ENCODE measurements at regions of chr10 and their contacts with region 1.

Region 1: DNA sequence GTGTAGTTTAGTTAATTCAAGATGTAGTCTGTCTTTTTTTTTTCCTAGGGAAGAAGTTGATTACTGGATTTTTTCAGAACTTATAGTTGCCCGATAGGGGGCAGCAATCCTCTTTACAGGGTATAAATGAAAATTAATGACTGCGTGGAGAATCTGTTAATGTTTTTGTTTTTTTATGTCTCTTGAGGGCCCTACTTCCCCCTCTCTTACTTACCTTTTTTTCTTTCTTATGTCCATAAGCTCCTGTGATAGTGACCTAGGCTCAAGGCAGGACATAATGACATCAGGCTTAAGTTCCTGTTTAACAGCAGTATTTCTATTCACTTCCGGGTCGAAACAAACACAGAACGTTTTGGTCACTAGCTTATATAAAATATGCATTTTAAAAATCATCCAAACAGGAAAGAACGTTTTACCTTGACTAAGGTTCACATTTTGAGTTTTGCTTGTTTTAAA is 18.8 kb downstream of the CDC123 start:
- DNase-seq: no peak
- ATAC-seq: no peak
- H3K4me3 Mint-ChIP-seq: peak overlapping the region; percentile 14
- H3K27ac Mint-ChIP-seq: peak overlapping the region; percentile 82
- H3K4me1 Mint-ChIP-seq: peaks cover 13% of the 10 kb centered on the region
- H3K27me3 Mint-ChIP-seq: no peaks in the 10 kb centered on the region

Region 2: GRCh38 chr10:12195603-12196506 is 18.9 kb before region 1 on chr10 and contains the starts of genes CDC123 and NUDT5:
- CTCF ChIA-PET with region 1: interaction called, 20 read pairs
- DNase-seq: peak; percentile 93
- ATAC-seq: peak; percentile 94
- H3K4me3 Mint-ChIP-seq: peak within 1 kb of the TSS; percentile 97
- H3K27ac Mint-ChIP-seq: peak within 1 kb of the TSS; percentile 92
- H3K4me1 Mint-ChIP-seq: peaks cover 57% of the 10 kb centered on the region
- H3K27me3 Mint-ChIP-seq: no peaks in the 10 kb centered on the region
- total RNA-seq, gene CDC123: 95.2 to 130 TPM
- total RNA-seq, gene NUDT5: 107 to 125 TPM

Region 3: GRCh38 chr10:12201543-12201942 is 13.2 kb before region 1 on chr10:
- CTCF ChIA-PET with region 1: interaction called, 20 read pairs
- DNase-seq: peak; percentile 56
- ATAC-seq: peak; percentile 70
- H3K4me3 Mint-ChIP-seq: peak overlapping the region; percentile 10
- H3K27ac Mint-ChIP-seq: peak overlapping the region; percentile 77
- H3K4me1 Mint-ChIP-seq: peaks cover 53% of the 10 kb centered on the region
- H3K27me3 Mint-ChIP-seq: no peaks in the 10 kb centered on the region

Region 4: GRCh38 chr10:12225444-12225843 is 10.7 kb after region 1 on chr10:
- CTCF ChIA-PET with region 1: interaction called, 12 read pairs
- DNase-seq: no peak
- ATAC-seq: no peak
- H3K4me3 Mint-ChIP-seq: no peak overlapping the region
- H3K27ac Mint-ChIP-seq: no peak overlapping the region
- H3K4me1 Mint-ChIP-seq: no peaks in the 10 kb centered on the region
- H3K27me3 Mint-ChIP-seq: no peaks in the 10 kb centered on the region

Region 5: GRCh38 chr10:12299222-12299965 is 84.6 kb after region 1 on chr10:
- CTCF ChIA-PET with region 1: no interaction called
- DNase-seq: no peak
- ATAC-seq: no peak
- H3K4me3 Mint-ChIP-seq: no peak overlapping the region
- H3K27ac Mint-ChIP-seq: no peak overlapping the region
- H3K4me1 Mint-ChIP-seq: no peaks in the 10 kb centered on the region
- H3K27me3 Mint-ChIP-seq: peaks cover 3% of the 10 kb centered on the region

Region 6: GRCh38 chr10:12656518-12657142 is 441.8 kb after region 1 on chr10:
- CTCF ChIA-PET with region 1: interaction called, 23 read pairs
- DNase-seq: no peak
- ATAC-seq: peak; percentile 82
- H3K4me3 Mint-ChIP-seq: no peak overlapping the region
- H3K27ac Mint-ChIP-seq: no peak overlapping the region
- H3K4me1 Mint-ChIP-seq: peaks cover 21% of the 10 kb centered on the region
- H3K27me3 Mint-ChIP-seq: no peaks in the 10 kb centered on the region

Region 7: GRCh38 chr10:12710594-12711349 is 496.0 kb after region 1 on chr10:
- CTCF ChIA-PET with region 1: interaction called, 17 read pairs
- DNase-seq: peak; percentile 86
- ATAC-seq: peak; percentile 92
- H3K4me3 Mint-ChIP-seq: no peak overlapping the region
- H3K27ac Mint-ChIP-seq: peak overlapping the region; percentile 67
- H3K4me1 Mint-ChIP-seq: peaks cover 51% of the 10 kb centered on the region
- H3K27me3 Mint-ChIP-seq: no peaks in the 10 kb centered on the region